OCI-LY7 (cell line): ENCODE measurements at regions of chr2 and their contacts with region 1.

Region 1: DNA sequence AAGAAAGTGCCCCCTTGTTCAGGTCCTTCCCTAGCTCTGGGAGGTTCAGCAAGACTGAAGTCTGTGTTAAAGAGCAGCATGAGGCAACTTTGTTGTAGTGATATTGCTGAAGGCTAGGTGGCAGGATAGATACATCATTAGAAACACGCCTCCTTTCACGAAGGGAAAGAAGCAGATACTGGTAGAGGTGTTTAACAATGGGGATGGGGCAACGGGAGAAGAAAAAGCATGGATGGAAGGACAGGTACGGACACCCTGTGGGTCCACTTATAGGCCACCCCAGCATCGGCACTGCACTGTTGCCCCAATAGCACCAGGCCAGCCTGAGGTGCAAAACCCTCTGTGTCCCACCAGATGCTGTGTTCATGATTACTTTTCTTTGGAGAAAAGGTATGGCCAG is 3.5 kb upstream of the IGFBP5 start:
- DNase-seq: peak; percentile 42
- H3K4me3 ChIP-seq: no peak overlapping the region
- H3K27ac ChIP-seq: no peak overlapping the region
- H3K4me1 ChIP-seq: no peaks in the 10 kb centered on the region
- CTCF ChIP-seq: peak; percentile 73

Region 2: GRCh38 chr2:216328347-216328746 is 370.5 kb before region 1 on chr2:
- CTCF ChIA-PET with region 1: no interaction called
- POLR2A ChIA-PET with region 1: no interaction called
- intact Hi-C with region 1: no loop called
- DNase-seq: no peak
- H3K4me3 ChIP-seq: no peak overlapping the region
- H3K27ac ChIP-seq: no peak overlapping the region
- H3K4me1 ChIP-seq: no peaks in the 10 kb centered on the region
- CTCF ChIP-seq: no peak

Region 3: GRCh38 chr2:216680951-216681629 is 17.8 kb before region 1 on chr2:
- CTCF ChIA-PET with region 1: no interaction called
- POLR2A ChIA-PET with region 1: no interaction called
- intact Hi-C with region 1: no loop called
- DNase-seq: no peak
- H3K4me3 ChIP-seq: no peak overlapping the region
- H3K27ac ChIP-seq: no peak overlapping the region
- H3K4me1 ChIP-seq: no peaks in the 10 kb centered on the region
- CTCF ChIP-seq: no peak

Region 4: GRCh38 chr2:216713691-216714336 is 14.9 kb after region 1 on chr2:
- CTCF ChIA-PET with region 1: no interaction called
- POLR2A ChIA-PET with region 1: no interaction called
- intact Hi-C with region 1: no loop called
- DNase-seq: no peak
- H3K4me3 ChIP-seq: no peak overlapping the region
- H3K27ac ChIP-seq: no peak overlapping the region
- H3K4me1 ChIP-seq: no peaks in the 10 kb centered on the region
- CTCF ChIP-seq: no peak

Region 5: GRCh38 chr2:216880509-216881184 is 181.8 kb after region 1 on chr2:
- CTCF ChIA-PET with region 1: no interaction called
- POLR2A ChIA-PET with region 1: no interaction called
- intact Hi-C with region 1: loop called (anchors 5 kb)
- DNase-seq: no peak
- H3K4me3 ChIP-seq: no peak overlapping the region
- H3K27ac ChIP-seq: no peak overlapping the region
- H3K4me1 ChIP-seq: no peaks in the 10 kb centered on the region
- CTCF ChIP-seq: no peak

Region 6: DNA sequence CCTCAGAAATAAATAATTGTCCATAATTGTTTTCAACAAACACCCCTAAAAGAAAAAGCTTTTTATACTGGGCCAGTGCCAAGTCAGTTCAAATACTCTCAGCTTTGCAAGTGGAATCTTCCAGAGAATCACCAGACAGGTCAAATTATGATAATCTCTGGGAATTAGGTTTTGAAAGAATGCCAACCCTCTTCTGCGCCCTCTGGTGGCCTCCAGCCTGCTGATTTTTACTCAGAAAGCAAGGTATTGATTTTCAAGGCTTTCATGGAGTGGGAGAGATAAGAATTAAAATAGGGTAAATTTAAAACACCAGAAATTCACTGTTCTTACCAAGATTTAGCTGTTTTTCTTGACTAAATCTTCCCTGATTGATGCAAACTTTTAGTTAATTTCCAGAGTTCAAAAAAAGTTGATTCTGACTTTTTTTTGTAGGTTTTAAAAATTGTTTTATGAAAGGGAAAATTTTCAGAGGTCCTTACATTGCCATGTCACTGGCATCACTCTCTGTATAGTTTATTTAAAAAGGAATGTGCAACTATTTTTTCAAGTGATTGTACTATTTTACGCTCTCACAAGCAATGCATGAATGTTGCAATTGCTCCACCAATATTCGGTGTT is 443.9 kb after region 1 on chr2:
- CTCF ChIA-PET with region 1: no interaction called
- POLR2A ChIA-PET with region 1: no interaction called
- intact Hi-C with region 1: loop called (anchors 2 kb)
- DNase-seq: peak; percentile 34
- H3K4me3 ChIP-seq: no peak overlapping the region
- H3K27ac ChIP-seq: no peak overlapping the region
- H3K4me1 ChIP-seq: no peaks in the 10 kb centered on the region
- CTCF ChIP-seq: peak; percentile 95

Region 7: GRCh38 chr2:217510771-217511291 is 811.9 kb after region 1 on chr2:
- CTCF ChIA-PET with region 1: no interaction called
- POLR2A ChIA-PET with region 1: no interaction called
- intact Hi-C with region 1: loop called (anchors 5 kb)
- DNase-seq: peak; percentile 53
- H3K4me3 ChIP-seq: no peak overlapping the region
- H3K27ac ChIP-seq: no peak overlapping the region
- H3K4me1 ChIP-seq: no peaks in the 10 kb centered on the region
- CTCF ChIP-seq: peak; percentile 81